ENCODE measurements at regions of chr18 and their contacts with region 1.

Region 1: DNA sequence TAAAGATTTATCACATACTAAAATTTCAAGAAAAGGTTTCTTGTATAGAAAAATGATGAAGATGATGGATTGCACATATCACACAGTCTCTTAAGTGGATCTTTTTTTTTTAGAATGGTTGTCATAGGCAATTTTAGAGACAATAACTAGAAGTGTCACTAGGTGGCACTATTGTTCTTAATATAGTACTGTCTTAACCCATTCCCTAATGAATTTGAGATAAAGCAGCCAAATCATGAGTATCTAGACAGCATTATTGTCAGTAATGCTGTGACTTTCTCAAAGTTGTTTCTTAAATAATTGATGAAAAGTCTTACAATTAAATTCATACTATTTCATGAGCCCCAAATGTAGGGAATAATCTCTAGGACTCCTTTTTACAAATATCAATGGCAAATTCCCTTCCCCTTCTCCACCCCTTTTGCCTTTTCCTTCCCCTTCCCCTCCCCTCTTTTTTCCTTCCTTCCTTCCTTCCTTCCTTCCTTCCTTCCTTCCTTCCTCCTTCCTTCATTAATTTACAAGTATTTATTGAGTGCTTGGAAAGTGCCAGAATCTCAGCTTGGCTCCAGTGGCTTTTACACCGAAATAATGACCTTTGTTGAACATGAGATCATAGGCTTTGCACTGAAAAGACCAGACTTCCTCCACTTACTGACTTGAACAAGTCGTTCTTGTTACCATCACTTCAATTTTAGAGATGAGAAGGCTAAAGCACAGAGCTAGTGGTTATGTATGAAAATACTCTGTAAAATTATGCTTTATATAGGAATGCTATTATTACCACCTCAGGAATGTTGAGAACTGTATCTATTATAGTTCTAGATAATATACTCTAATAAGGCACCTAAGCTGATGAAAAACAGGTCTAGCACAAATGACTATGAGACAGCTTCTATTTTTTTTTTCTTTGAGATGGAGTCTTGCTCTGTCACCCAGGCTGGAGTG is 19.8 kb downstream of the MYL12B start:
- DNase-seq: no peak
- H3K4me3 Mint-ChIP-seq: no peak overlapping the region
- H3K27ac Mint-ChIP-seq: peak overlapping the region; percentile 38
- H3K4me1 Mint-ChIP-seq: peaks cover 5% of the 10 kb centered on the region
- H3K27me3 Mint-ChIP-seq: no peaks in the 10 kb centered on the region

Region 2: GRCh38 chr18:3297025-3297984 is 15.6 kb after region 1 on chr18:
- intact Hi-C with region 1: loop called (anchors 2 kb)
- DNase-seq: peak; percentile 91
- H3K4me3 Mint-ChIP-seq: peak overlapping the region; percentile 87
- H3K27ac Mint-ChIP-seq: peak overlapping the region; percentile 59
- H3K4me1 Mint-ChIP-seq: peaks cover 7% of the 10 kb centered on the region
- H3K27me3 Mint-ChIP-seq: peaks cover 35% of the 10 kb centered on the region

Region 3: DNA sequence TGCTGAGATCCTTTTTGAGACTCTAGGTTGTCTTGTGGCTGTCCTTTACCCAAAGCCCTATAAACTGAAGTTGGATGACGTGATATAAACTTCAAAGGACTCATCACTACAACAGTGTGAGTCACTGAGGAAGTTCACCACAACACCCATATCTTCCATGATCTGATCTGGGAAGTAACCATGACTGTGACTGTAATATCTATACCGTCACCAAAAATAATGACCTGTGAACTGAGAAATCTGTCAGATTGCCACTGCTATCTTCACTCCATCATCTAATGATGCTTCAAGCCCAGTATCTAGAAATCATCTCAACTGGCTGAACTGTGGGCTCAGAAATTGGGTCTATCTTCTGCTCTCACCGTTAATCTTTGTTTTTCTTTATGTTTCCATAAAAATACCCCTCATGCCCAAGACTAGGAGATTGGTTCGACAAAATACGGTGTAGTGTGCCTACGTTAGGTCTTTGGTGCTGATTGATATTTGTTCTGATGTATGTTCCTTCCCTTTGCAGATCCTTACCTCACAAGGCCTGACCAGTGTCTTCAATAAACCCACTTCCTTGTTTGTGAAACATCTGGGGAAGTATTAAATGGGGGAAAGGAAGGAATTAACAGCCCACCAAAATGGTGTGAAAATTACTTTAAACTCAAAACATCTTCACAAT is 58.4 kb after region 1 on chr18:
- intact Hi-C with region 1: no loop called
- DNase-seq: no peak
- H3K4me3 Mint-ChIP-seq: no peak overlapping the region
- H3K27ac Mint-ChIP-seq: peak overlapping the region; percentile 48
- H3K4me1 Mint-ChIP-seq: peaks cover 19% of the 10 kb centered on the region
- H3K27me3 Mint-ChIP-seq: no peaks in the 10 kb centered on the region

Region 4: GRCh38 chr18:3454365-3455089 is 172.8 kb after region 1 on chr18:
- intact Hi-C with region 1: loop called (anchors 2 kb)
- DNase-seq: no peak
- H3K4me3 Mint-ChIP-seq: peak overlapping the region; percentile 86
- H3K27ac Mint-ChIP-seq: peak overlapping the region; percentile 97
- H3K4me1 Mint-ChIP-seq: peaks cover 50% of the 10 kb centered on the region
- H3K27me3 Mint-ChIP-seq: no peaks in the 10 kb centered on the region

Region 5: GRCh38 chr18:3585656-3586509 is 304.2 kb after region 1 on chr18:
- intact Hi-C with region 1: loop called (anchors 1 kb)
- DNase-seq: peak; percentile 57
- H3K4me3 Mint-ChIP-seq: no peak overlapping the region
- H3K27ac Mint-ChIP-seq: peak overlapping the region; percentile 80
- H3K4me1 Mint-ChIP-seq: peaks cover 36% of the 10 kb centered on the region
- H3K27me3 Mint-ChIP-seq: no peaks in the 10 kb centered on the region

Region 6: GRCh38 chr18:3771121-3771971 is 489.6 kb after region 1 on chr18:
- intact Hi-C with region 1: loop called (anchors 10 kb)
- DNase-seq: peak; percentile 75
- H3K4me3 Mint-ChIP-seq: peak overlapping the region; percentile 57
- H3K27ac Mint-ChIP-seq: no peak overlapping the region
- H3K4me1 Mint-ChIP-seq: peaks cover 6% of the 10 kb centered on the region
- H3K27me3 Mint-ChIP-seq: peaks cover 28% of the 10 kb centered on the region

Region 7: DNA sequence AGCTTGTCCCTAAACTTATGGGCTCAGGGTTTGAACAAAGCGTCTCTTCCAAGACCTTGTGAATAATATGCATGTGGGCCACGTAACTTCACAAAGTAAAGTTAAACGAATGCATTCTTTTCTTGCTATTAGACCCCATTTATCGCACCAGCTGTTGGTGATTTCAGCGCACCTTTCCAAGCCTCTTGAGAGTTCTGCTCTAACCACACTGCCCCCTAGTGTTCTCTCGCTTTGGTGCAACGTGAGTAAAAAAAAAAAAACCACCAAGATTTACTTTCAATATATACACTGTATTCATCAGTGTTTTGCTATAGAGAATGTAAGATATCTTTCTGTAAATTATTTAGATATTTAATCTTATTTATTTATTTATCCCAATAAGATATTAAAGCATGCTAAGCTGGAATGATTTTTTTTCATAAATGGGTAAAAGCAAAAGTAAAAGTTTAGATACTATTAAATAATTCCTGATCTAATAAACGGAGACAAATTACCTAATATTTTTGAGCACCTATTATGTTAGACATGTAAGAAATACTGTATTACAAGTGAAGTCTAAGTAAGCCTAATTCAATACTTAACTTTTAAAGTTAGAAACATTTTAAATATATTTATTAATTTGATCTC is 713.9 kb after region 1 on chr18:
- intact Hi-C with region 1: loop called (anchors 10 kb)
- DNase-seq: peak; percentile 38
- H3K4me3 Mint-ChIP-seq: no peak overlapping the region
- H3K27ac Mint-ChIP-seq: no peak overlapping the region
- H3K4me1 Mint-ChIP-seq: no peaks in the 10 kb centered on the region
- H3K27me3 Mint-ChIP-seq: no peaks in the 10 kb centered on the region